Activated CD8-positive, alpha-beta memory T cell treated with anti-CD3 and anti-CD28 coated beads, Interleukin-2, amount 10 ng/mL, durations not matched to agents 7 days and 5 days (primary cell): ENCODE measurements at regions of chr20 and their contacts with region 1.

Region 1: DNA sequence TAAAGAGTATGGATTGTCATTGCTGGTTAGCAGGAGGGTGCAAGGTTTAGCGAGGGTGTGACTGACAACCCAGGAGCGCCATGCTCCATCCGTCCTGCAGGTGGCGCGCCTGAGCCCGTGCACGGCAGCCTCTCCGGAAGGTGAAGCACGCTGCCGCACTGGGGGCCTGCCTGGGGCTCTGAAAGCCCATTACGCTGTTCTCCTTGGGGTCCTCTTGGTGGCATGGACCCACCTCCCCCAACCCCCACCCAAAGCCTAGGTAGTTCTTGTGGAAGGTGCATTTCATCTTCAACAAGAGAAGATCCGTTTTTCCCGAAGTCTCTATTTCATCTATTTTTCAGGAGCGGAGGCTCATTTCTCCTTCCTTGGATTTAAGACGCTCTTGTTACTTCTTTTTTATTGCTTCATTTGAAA is 197.4 kb upstream of the KCNG1 start:
- DNase-seq: peak; percentile 62
- ATAC-seq: peak; percentile 58
- H3K4me3 Mint-ChIP-seq: no peak overlapping the region
- H3K27ac Mint-ChIP-seq: no peak overlapping the region
- H3K4me1 Mint-ChIP-seq: peaks cover 8% of the 10 kb centered on the region
- H3K27me3 Mint-ChIP-seq: peaks cover 56% of the 10 kb centered on the region

Region 2: GRCh38 chr20:51199920-51200319 is 20.4 kb before region 1 on chr20:
- CTCF ChIA-PET with region 1: no interaction called
- DNase-seq: no peak
- ATAC-seq: no peak
- H3K4me3 Mint-ChIP-seq: no peak overlapping the region
- H3K27ac Mint-ChIP-seq: no peak overlapping the region
- H3K4me1 Mint-ChIP-seq: no peaks in the 10 kb centered on the region
- H3K27me3 Mint-ChIP-seq: peaks cover 32% of the 10 kb centered on the region

Region 3: DNA sequence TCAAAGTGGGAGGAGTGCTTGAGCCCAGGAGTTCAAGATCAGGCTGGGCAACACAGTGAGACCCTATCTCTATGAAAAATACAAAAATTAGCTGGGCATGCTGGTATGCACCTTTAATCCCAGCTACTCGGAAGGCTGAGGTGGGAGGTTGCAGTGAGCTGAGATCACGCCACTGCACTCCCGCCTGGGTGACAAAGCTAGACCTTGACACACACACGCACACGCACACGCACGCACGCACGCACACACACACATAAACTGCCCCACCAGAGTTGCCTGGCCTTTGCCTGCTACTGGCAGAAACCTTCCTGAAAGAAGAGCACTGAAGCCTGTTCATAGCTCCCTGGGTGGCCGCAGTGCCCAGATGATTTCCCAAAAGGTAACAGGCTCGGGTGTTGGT is 75.3 kb after region 1 on chr20:
- CTCF ChIA-PET with region 1: no interaction called
- DNase-seq: no peak
- ATAC-seq: no peak
- H3K4me3 Mint-ChIP-seq: no peak overlapping the region
- H3K27ac Mint-ChIP-seq: no peak overlapping the region
- H3K4me1 Mint-ChIP-seq: no peaks in the 10 kb centered on the region
- H3K27me3 Mint-ChIP-seq: peaks cover 20% of the 10 kb centered on the region

Region 4: GRCh38 chr20:51306503-51307358 is 86.4 kb after region 1 on chr20:
- CTCF ChIA-PET with region 1: interaction called, 10 read pairs
- DNase-seq: peak; percentile 76
- ATAC-seq: peak; percentile 96
- H3K4me3 Mint-ChIP-seq: no peak overlapping the region
- H3K27ac Mint-ChIP-seq: no peak overlapping the region
- H3K4me1 Mint-ChIP-seq: peaks cover 3% of the 10 kb centered on the region
- H3K27me3 Mint-ChIP-seq: peaks cover 30% of the 10 kb centered on the region